ENCODE measurements at regions of chr17 and their contacts with region 1.

Region 1: DNA sequence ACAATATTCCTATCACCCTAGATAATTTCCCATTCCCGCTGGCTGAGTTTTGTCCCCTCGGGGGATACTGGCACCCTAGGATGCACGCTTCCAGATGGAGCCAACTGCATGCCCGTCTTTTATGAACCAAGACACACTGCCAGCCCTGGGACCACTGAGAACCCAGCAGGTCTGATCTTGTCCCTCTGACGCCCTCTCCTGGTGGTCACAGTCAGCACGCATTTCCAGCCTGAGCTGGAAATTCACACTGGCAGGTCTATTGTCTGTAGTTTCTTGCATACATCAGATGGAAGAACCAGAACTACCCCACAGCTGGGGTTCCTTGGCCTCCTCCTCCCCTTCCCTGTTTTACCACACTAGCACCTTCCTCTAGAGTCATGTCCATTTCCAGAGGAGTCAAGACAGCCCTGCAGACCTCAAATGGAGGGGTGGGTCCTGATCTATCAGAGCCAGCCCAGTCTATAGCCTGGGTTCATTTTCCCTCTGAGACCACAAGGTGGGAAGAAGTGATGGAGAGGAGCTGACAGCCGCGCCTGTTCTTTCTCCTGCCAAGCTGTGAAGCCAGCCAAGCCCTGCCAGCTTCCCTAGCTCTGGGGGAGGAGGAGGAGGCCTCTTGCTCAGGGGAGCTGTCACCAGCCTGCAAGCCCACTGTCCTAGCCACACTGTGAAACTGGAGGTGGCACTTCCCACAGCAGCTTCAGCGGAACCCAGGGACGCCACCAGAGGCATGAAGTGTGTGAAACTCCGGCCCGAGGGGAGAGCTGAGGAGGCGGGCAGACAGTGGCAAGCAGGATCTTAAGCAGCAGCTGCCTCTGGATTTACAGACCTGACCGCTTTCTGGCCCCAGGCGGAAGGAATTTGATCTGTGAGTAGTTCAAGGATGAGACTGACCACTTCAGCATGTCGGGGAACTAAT is 29.3 kb downstream of the MXRA7 start:
- DNase-seq: peak; percentile 70 to 86 (median 78)
- H3K4me3 ChIP-seq: no peak overlapping the region
- H3K27ac ChIP-seq: no peak overlapping the region
- H3K4me1 ChIP-seq: peaks cover 0 to 5% (median 1%) of the 10 kb centered on the region in 4 experiments
- H3K27me3 ChIP-seq: no peaks in the 10 kb centered on the region

Region 2: DNA sequence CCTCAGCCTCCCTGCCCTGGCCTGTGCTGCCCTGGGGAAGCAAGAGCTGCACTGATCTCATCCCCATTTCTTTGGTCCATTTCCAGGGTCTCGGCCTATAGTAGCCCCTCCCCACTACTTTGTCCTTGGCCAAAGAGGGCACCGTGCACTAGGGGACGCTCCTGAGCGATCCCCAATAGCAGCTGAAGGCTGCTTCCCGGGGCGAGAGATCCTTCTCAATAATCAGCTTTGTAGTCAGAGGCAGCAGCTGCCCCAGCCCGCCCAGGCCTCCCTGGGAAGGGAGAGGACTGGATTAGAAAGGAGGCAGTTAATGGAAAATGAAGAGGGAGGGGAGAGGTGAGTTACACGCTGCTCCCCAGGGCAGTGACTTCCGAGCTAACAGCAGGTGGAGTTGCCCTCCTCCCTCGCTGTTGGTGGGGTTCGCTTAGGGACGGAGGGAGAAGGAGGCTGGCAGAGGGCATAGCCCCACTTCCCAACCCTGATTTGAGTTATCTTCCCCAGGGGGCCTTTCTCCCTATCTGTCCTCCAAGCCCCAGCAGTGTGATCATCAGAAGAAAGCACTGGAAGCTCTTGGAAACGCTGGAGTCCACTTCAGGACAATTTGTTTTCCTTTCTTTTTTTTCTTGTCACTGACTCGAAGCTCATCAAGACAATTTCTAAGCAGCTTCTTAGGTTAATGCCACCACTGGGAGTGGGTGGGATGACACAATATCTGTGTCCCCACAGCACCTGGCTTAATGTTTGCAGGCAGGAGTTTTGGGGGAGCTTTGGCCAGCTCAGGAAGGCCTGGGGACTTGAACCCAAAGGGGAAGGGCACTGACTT is 26.7 kb after region 1 on chr17:
- CTCF ChIA-PET with region 1: interaction called, 14 read pairs
- POLR2A ChIA-PET with region 1: interaction called, 3 read pairs
- DNase-seq: no peak
- H3K4me3 ChIP-seq: no peak overlapping the region
- H3K27ac ChIP-seq: no peak overlapping the region
- H3K4me1 ChIP-seq: peaks cover 3 to 26% (median 17%) of the 10 kb centered on the region in 4 experiments
- H3K27me3 ChIP-seq: peaks cover 0 to 11% (median 0%) of the 10 kb centered on the region in 5 experiments

Region 3: GRCh38 chr17:76714822-76715495 is 33.5 kb after region 1 on chr17:
- CTCF ChIA-PET with region 1: interaction called, 11 read pairs
- POLR2A ChIA-PET with region 1: interaction called, 3 read pairs
- DNase-seq: peak; percentile 57 to 72 (median 63)
- H3K4me3 ChIP-seq: peak overlapping the region in 5 of 7 experiments; percentile 31 to 57 (median 45)
- H3K27ac ChIP-seq: peak overlapping the region; percentile 46 to 74
- H3K4me1 ChIP-seq: peaks cover 17 to 43% (median 38%) of the 10 kb centered on the region in 4 experiments
- H3K27me3 ChIP-seq: peaks cover 0 to 4% (median 0%) of the 10 kb centered on the region in 5 experiments